ENCODE measurements at regions of chr4 and their contacts with region 1.

Region 1: DNA sequence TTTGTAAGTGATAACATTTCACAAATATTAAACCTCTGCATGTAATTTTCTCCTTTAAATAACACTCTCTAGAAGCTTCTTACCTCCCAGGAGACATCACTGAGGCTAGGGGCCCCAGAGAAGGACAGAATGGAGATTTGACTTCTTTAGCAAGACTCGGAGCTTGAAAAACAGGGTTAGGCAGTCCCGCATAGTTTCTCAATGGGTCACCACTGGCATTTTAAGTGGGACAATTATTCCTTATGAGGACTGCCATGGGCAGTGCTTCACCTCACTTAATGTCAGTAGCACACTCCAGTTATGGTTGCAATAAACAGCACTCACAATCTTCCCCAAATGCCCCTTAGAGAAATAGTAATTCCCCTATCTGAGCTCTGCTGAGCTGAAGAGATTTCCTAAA is 66.7 kb upstream of the NOCT start:
- DNase-seq: no peak
- H3K4me3 Mint-ChIP-seq: no peak overlapping the region
- H3K27ac Mint-ChIP-seq: no peak overlapping the region
- H3K4me1 Mint-ChIP-seq: peaks cover 11% of the 10 kb centered on the region
- H3K27me3 Mint-ChIP-seq: no peaks in the 10 kb centered on the region
- CTCF ChIP-seq: no peak

Region 2: GRCh38 chr4:138938366-138938690 is 10.6 kb before region 1 on chr4:
- CTCF ChIA-PET with region 1: interaction called, 17 read pairs
- POLR2A ChIA-PET with region 1: interaction called, 3 read pairs
- intact Hi-C with region 1: no loop called
- DNase-seq: peak; percentile 58
- H3K4me3 Mint-ChIP-seq: no peak overlapping the region
- H3K27ac Mint-ChIP-seq: no peak overlapping the region
- H3K4me1 Mint-ChIP-seq: no peaks in the 10 kb centered on the region
- H3K27me3 Mint-ChIP-seq: no peaks in the 10 kb centered on the region
- CTCF ChIP-seq: peak; percentile 55

Measured in MCF 10A (cell line).